ENCODE measurements at regions of chr16 and their contacts with region 1.

Region 1: DNA sequence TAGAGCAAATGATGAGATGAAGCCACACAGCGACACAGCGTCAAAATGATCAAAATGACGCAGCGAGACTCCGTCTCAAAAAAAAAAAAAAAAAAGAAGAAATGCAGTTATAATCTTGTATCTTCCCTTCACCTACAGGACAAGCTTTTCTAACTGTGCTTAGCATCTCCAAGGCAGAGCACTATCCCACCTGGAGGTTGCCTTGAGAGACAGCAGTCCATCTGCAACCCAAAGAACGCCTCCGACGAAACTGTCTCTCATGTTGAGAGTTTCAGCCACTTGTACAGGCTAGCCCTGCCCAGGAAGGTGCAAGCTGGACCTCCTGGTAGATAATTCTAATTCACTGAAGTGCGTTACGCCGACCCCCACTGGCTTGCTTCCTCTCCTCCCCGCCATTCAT is 46.7 kb upstream of the GCSH start:
- DNase-seq: no peak
- H3K4me3 ChIP-seq: no peak overlapping the region
- H3K4me3 Mint-ChIP-seq: no peak overlapping the region
- H3K27ac ChIP-seq: no peak overlapping the region
- H3K27ac Mint-ChIP-seq: no peak overlapping the region
- H3K4me1 ChIP-seq: no peaks in the 10 kb centered on the region
- H3K4me1 Mint-ChIP-seq: no peaks in the 10 kb centered on the region
- H3K27me3 ChIP-seq: no peaks in the 10 kb centered on the region
- H3K27me3 Mint-ChIP-seq: peaks cover 5 to 24% of the 10 kb centered on the region in 2 donors

Region 2: DNA sequence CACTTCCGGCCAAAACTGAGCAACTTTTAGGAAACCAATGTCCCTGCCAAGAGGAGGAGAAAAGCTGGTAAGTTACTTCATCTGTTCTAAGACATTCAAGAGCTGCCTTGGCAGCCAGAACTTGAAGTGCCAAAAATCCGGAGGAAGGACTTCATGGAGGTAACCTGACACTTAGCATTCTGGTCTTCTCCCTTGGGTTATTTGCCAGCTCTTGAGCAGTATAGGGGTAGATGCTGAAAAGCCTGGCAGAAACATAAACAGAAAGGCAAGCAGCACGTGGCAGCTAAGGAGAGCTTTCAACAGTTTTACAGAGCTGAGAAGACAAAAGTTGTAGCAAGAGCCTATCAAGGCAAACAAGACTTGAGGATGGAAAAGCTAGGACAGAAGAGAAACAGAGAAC is 391.7 kb before region 1 on chr16:
- CTCF ChIA-PET with region 1: no interaction called
- POLR2A ChIA-PET with region 1: interaction called, 14 read pairs
- DNase-seq: no peak
- H3K4me3 ChIP-seq: no peak overlapping the region
- H3K4me3 Mint-ChIP-seq: no peak overlapping the region
- H3K27ac ChIP-seq: no peak overlapping the region
- H3K27ac Mint-ChIP-seq: no peak overlapping the region
- H3K4me1 ChIP-seq: no peaks in the 10 kb centered on the region
- H3K4me1 Mint-ChIP-seq: peaks cover 25 to 65% (median 33%) of the 10 kb centered on the region in 3 donors
- H3K27me3 ChIP-seq: no peaks in the 10 kb centered on the region
- H3K27me3 Mint-ChIP-seq: no peaks in the 10 kb centered on the region